A549 (cell line): ENCODE measurements at regions of chr6 and their contacts with region 1.

Region 1: DNA sequence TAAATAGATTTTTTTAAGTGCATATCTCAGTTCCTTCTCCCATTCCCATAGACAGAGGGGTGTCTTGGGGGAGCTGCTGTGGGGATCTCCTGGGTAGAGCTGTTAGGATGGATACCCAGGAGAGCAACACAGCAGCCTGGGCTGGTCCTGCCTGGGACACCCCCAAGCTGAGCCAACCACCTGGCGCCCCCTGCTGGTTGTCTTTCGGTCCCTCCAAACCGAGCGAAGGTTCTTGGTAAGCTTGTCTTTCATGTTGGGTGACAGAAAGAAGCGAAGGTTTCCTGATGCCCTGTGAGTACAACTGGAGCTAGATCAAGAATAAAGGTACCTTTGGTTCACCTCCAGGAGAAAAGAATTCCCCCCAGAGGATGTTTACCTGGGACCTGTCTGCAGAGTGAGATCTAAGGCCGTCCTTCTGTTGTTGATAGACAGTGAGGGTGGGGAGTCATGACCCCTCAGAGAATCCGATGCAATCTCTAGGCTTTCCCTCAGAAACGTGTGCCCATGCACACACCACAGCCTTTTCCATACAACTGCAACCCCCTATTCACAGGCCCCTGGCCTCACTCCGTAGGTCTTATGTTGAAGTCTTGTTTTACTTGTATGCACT is 50.8 kb downstream of the SNX9 start:
- DNase-seq: peak; percentile 43 to 71
- ATAC-seq: peak; percentile 96 to 98
- H3K4me3 ChIP-seq: no peak overlapping the region
- H3K27ac ChIP-seq: no peak overlapping the region
- H3K4me1 ChIP-seq: peaks cover 11% of the 10 kb centered on the region; the same call in 2 of the 3 replicates
- CTCF ChIP-seq: peak; percentile 82
- EP300 ChIP-seq: no peak
- POLR2A ChIP-seq: no peak
- RAD21 ChIP-seq: peak; percentile 82 to 83

Region 2: GRCh38 chr6:157861814-157862213 is 12.0 kb before region 1 on chr6:
- CTCF ChIA-PET with region 1: interaction called, 18 read pairs
- POLR2A ChIA-PET with region 1: no interaction called
- DNase-seq: peak in 1 of 2 experiments; percentile 11
- ATAC-seq: no peak; a peak in 1 of 6 replicates
- H3K4me3 ChIP-seq: no peak overlapping the region
- H3K27ac ChIP-seq: peak overlapping the region in 1 of 2 experiments; percentile 60; a peak in 2 of 6 replicates
- H3K4me1 ChIP-seq: peaks cover 37% of the 10 kb centered on the region
- CTCF ChIP-seq: no peak
- EP300 ChIP-seq: no peak
- POLR2A ChIP-seq: no peak
- RAD21 ChIP-seq: no peak

Region 3: DNA sequence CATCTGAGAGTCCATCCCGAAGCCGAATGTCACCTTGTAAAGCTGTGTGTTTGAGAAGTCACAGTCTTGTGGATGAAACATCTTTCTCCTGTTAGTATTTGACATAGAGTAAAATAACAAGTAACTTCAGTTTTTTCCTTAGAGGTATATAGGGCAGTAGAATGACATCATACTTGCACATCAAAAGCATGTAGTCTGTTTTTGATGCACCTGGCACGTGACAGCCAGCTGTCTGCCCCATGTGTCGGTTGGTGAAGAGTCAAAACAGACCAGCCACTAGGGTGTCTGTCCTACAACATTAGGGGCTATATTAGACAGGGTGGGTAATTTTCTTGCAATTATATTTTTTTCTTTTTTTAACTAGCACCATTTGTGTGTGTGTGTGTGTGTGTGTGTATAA is 19.4 kb after region 1 on chr6:
- CTCF ChIA-PET with region 1: interaction called, 10 read pairs
- POLR2A ChIA-PET with region 1: no interaction called
- DNase-seq: no peak
- ATAC-seq: no peak
- H3K4me3 ChIP-seq: no peak overlapping the region
- H3K27ac ChIP-seq: no peak overlapping the region
- H3K4me1 ChIP-seq: no peaks in the 10 kb centered on the region
- CTCF ChIP-seq: no peak
- EP300 ChIP-seq: no peak
- POLR2A ChIP-seq: no peak
- RAD21 ChIP-seq: no peak

Region 4: GRCh38 chr6:158031381-158032353 is 157.8 kb after region 1 on chr6:
- CTCF ChIA-PET with region 1: no interaction called
- POLR2A ChIA-PET with region 1: no interaction called
- DNase-seq: peak in 1 of 2 experiments; percentile 68
- ATAC-seq: peak; percentile 27 to 52; a peak in 4 of 6 replicates
- H3K4me3 ChIP-seq: no peak overlapping the region
- H3K27ac ChIP-seq: peak overlapping the region; percentile 92 to 94
- H3K4me1 ChIP-seq: peaks cover 75% of the 10 kb centered on the region
- CTCF ChIP-seq: no peak
- EP300 ChIP-seq: peak; percentile 39 to 77; a peak in 2 of 5 replicates
- POLR2A ChIP-seq: no peak
- RAD21 ChIP-seq: no peak

Region 5: DNA sequence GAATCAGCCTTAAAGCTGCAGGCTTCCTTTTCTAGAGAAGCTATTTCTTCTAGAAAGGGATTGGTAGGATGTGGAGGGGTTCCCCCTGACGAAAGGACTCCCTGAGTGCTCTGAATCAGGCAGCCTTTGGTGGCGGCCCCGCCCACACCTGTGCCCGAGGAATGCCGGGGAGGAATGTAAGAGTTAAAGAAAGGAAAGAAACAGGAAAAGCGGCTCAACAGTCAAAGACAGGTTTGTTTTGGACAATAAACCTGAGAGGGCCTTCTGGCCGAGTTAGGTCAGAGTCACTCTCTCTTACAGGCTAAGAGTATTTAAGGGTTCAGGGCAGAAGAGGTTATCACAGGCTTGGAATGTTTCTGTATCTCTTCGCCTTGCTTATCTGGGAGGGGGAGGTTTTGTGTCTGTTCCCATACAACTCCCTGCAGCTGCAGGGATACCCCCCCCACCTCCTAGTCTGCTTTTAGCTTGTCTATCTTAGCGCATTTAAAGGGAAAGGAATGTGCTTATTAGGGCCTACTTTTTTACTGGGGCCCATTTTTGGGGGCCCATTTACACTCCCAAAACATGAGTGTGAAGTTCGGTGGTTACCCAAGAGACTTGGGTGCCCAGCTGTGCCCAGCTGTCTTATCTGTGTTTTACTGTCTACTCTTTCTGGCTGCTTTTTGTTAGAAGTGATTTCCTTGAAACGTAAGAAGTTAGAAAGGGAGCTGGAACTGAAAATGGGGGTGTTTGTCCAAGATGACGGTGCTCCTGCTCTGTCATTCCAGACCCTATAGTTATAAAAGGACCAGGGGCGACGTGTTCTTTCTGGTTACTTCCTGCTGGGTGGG is 737.9 kb after region 1 on chr6:
- CTCF ChIA-PET with region 1: no interaction called
- POLR2A ChIA-PET with region 1: no interaction called
- DNase-seq: no peak
- ATAC-seq: no peak
- H3K4me3 ChIP-seq: no peak overlapping the region
- H3K27ac ChIP-seq: no peak overlapping the region
- H3K4me1 ChIP-seq: no peaks in the 10 kb centered on the region
- CTCF ChIP-seq: no peak
- EP300 ChIP-seq: no peak
- POLR2A ChIP-seq: no peak
- RAD21 ChIP-seq: no peak